GM12878 (cell line): ENCODE measurements at regions of chr3 and their contacts with region 1.

Region 1: DNA sequence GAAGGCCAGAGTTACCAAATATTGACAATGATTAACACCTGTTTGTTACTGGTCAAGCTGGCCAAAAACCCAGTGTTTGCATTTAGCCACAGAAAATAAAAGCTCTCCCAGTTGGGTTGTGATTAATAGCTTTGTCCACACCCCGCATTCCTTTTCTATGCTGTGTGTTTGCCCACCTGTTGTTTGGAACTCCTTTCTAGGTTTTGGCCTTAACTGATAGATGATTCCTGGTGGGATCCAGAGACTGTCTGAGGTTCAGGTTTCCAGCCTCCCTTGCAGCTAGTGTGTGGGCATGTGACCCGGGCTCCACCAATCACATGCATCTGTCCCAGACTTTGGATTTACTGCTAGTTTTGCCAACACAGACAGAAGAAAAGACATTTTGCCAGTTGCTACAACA is 83.8 kb downstream of the PTPRG start:
- DNase-seq: no peak
- ATAC-seq: no peak
- H3K4me3 ChIP-seq: no peak overlapping the region
- H3K27ac ChIP-seq: no peak overlapping the region
- H3K4me1 ChIP-seq: no peaks in the 10 kb centered on the region
- H3K27me3 ChIP-seq: no peaks in the 10 kb centered on the region
- CTCF ChIP-seq: no peak
- EP300 ChIP-seq: no peak
- POLR2A ChIP-seq: no peak
- RAD21 ChIP-seq: no peak

Region 2: GRCh38 chr3:61601831-61602230 is 43.3 kb before region 1 on chr3:
- CTCF ChIA-PET with region 1: no interaction called
- POLR2A ChIA-PET with region 1: no interaction called
- RAD21 ChIA-PET with region 1: no interaction called
- SMC1A ChIA-PET with region 1: no interaction called
- in situ Hi-C with region 1: no loop called
- intact Hi-C with region 1: no loop called
- DNase-seq: no peak
- ATAC-seq: no peak
- H3K4me3 ChIP-seq: no peak overlapping the region
- H3K27ac ChIP-seq: no peak overlapping the region
- H3K4me1 ChIP-seq: no peaks in the 10 kb centered on the region
- H3K27me3 ChIP-seq: no peaks in the 10 kb centered on the region; a peak in 1 of 4 replicates
- CTCF ChIP-seq: no peak
- EP300 ChIP-seq: no peak
- POLR2A ChIP-seq: no peak
- RAD21 ChIP-seq: no peak

Region 3: DNA sequence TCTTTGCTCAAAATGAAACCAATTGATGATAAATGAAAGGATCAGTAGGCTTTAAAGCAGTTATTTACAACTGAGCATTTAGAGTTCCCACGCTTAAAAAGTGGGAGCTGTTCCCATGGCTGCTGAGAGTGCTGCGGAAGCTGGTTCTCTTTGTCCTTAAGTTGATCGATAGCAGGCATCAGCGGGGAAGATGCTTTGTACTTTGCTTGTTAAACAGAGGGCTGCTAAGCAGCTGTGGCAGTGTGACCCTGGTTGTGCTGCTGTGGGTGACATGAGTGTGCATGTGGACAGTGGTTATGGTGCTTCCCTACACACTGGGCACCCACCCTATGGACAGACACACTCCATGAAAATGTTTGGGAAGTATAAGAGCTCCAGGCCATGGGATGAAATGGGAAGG is 12.5 kb after region 1 on chr3:
- CTCF ChIA-PET with region 1: interaction called, 6 read pairs
- POLR2A ChIA-PET with region 1: interaction called, 5 read pairs
- RAD21 ChIA-PET with region 1: no interaction called
- SMC1A ChIA-PET with region 1: interaction called, 15 read pairs
- in situ Hi-C with region 1: no loop called
- intact Hi-C with region 1: no loop called
- DNase-seq: no peak
- ATAC-seq: 0 out of 3 replicates have a peak, but pooled peaks have one; percentile 18
- H3K4me3 ChIP-seq: no peak overlapping the region
- H3K27ac ChIP-seq: no peak overlapping the region
- H3K4me1 ChIP-seq: no peaks in the 10 kb centered on the region
- H3K27me3 ChIP-seq: no peaks in the 10 kb centered on the region
- CTCF ChIP-seq: no peak
- EP300 ChIP-seq: no peak
- POLR2A ChIP-seq: no peak
- RAD21 ChIP-seq: no peak